ENCODE measurements at regions of chr2 and their contacts with region 1.

Region 1: DNA sequence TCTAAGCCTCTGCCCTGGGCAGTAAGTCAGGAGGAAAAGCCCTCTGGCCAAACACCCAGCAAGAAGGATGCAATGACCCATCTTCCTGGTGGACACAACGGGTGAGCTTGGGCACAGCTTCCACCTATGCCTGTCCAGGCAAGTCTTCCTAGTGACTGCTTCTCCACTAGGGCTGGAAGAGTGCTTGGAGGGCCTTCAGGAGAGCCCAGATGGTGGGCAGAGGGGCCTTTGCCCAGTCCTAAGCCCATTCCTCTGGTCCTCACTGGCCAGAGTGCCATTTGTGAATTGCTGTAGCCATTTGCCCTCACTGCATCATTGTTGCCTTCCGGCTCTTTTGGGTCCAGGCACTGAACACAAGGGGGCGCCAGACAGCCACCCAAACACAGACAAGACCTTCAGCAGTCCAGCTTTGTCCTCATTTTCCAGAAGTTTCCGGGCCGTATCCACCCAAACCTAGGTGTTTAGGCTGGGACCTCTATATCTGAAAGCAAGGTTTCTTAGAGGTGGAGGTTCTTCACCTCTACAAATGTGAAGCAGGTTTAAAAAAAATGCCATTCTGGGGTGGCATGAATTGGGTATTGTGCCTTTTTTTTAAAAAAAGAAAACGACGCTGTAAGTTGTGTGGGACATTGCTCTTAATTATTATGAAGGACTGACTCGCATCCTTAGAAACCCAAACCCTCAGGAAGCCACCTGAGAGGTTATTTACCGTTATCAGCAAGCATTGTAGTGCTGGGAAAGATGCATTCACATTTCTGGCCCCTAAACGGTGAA is 29.5 kb downstream of the PAX8 start:
- DNase-seq: peak; percentile 63
- H3K4me3 Mint-ChIP-seq: no peak overlapping the region
- H3K27ac Mint-ChIP-seq: peak overlapping the region; percentile 56
- H3K4me1 Mint-ChIP-seq: peaks cover 46% of the 10 kb centered on the region
- H3K27me3 Mint-ChIP-seq: no peaks in the 10 kb centered on the region

Region 2: DNA sequence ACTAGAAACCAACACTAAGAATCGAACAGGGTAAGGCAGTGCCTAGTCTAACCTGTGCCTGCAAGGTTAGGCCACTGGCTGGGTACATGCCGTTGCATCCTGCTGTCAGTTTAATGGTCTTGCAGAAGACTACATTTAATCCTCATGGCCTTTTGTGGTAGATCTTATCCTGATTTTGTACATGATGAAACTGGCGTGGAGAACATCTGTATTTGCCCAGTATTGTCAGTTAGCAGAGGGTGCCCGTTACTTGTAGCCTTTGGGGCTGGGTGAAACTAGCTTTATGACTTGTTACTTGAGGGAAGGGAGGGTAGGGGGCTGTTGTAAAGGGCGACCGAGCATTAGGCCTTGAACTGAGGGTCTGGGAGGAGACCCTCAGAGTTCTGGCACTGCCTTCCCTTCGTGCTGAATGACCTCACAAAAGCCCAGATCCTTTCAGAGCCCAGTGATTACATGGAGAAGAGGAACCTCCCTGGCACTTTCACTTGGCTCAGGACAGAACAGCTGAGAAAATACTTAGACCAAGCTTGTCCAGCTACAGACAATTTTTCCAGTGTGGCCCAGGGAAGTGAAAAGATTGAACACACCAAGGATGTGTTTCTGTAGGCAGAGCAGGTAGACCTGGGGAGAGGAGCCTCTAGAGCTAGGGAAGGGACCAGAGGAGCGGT is 583.9 kb before region 1 on chr2:
- intact Hi-C with region 1: no loop called
- DNase-seq: no peak
- H3K4me3 Mint-ChIP-seq: no peak overlapping the region
- H3K27ac Mint-ChIP-seq: peak overlapping the region; percentile 56
- H3K4me1 Mint-ChIP-seq: peaks cover 34% of the 10 kb centered on the region
- H3K27me3 Mint-ChIP-seq: no peaks in the 10 kb centered on the region

Region 3: GRCh38 chr2:113273027-113273551 is 23.9 kb after region 1 on chr2:
- intact Hi-C with region 1: loop called (anchors 1 kb)
- DNase-seq: peak; percentile 20
- H3K4me3 Mint-ChIP-seq: no peak overlapping the region
- H3K27ac Mint-ChIP-seq: no peak overlapping the region
- H3K4me1 Mint-ChIP-seq: peaks cover 16% of the 10 kb centered on the region
- H3K27me3 Mint-ChIP-seq: peaks cover 72% of the 10 kb centered on the region

Region 4: DNA sequence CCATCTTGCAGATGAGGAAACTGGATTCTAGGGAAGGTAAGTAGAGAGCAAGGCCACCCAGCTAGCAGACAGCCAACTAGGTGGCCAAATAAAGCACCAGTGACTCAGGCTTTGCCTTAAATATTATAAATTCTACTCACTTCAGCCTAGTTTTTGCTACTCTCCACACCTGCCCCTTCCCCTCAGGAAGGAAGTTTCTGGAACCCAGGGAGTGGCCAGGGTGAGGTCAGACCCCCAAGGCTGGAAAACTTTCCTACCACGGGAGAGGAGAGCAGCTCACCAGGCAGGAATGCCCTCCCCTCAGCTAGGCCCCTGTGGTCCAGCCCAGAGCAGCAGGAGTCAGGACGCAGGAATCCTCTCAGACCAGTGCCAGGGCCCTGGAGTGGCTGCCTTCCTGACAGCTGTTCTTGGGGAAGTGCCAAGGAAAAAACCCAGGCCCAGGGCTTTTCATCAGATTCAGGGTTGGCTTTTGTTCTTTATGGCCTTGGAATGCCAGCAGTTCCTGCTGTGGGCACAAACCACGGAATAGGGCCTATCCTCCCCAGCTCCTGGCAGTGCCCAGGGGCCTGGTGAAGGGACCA is 34.6 kb after region 1 on chr2:
- intact Hi-C with region 1: no loop called
- DNase-seq: no peak
- H3K4me3 Mint-ChIP-seq: no peak overlapping the region
- H3K27ac Mint-ChIP-seq: no peak overlapping the region
- H3K4me1 Mint-ChIP-seq: no peaks in the 10 kb centered on the region
- H3K27me3 Mint-ChIP-seq: peaks cover 35% of the 10 kb centered on the region

Region 5: GRCh38 chr2:113370478-113371091 is 121.4 kb after region 1 on chr2:
- intact Hi-C with region 1: loop called (anchors 1 kb)
- DNase-seq: peak; percentile 47
- H3K4me3 Mint-ChIP-seq: no peak overlapping the region
- H3K27ac Mint-ChIP-seq: no peak overlapping the region
- H3K4me1 Mint-ChIP-seq: peaks cover 8% of the 10 kb centered on the region
- H3K27me3 Mint-ChIP-seq: peaks cover 8% of the 10 kb centered on the region

Region 6: DNA sequence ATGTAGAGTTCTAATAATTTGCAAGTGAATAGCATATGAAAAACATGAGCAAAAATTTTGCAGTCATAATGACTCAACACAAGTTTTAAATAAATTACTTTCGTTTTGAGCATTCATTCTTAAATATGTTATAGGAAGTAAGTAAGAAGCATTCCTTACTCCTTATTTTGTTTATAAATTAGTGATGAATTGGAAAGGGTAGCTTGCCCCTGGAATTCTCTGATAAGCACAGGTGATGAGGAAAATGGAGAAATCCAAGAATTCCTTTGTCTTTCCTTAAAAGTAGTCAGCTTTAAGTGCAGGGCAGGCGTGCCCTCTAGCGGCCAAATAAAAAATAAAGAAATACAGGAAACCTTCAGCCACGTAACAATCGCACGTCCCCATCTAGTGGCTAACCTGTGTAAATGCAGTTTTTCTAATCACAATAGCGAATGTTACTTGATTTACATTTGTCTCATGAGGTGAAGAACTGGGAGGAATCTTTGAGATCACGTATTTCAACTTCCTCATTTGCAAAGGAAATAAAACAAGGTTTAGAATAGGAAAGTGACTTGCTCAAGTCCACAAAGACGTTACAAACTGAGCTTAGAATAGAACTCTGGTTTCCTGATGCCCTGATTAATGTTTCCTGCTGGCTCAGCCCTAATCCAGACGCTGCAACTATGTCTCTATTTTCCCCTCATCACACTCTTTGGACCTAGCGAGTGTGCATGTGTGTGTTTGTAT is 141.1 kb after region 1 on chr2:
- intact Hi-C with region 1: loop called (anchors 5 kb)
- DNase-seq: peak; percentile 48
- H3K4me3 Mint-ChIP-seq: peak overlapping the region; percentile 53
- H3K27ac Mint-ChIP-seq: peak overlapping the region; percentile 65
- H3K4me1 Mint-ChIP-seq: peaks cover 16% of the 10 kb centered on the region
- H3K27me3 Mint-ChIP-seq: peaks cover 29% of the 10 kb centered on the region